ENCODE measurements at regions of chr1 and their contacts with region 1.

Region 1: GRCh38 chr1:182604169-182605164 is at the start of gene RGS16:
- DNase-seq: peak; percentile 61
- ATAC-seq: peak; percentile 91
- H3K4me3 ChIP-seq: peak within 1 kb of the TSS; percentile 85
- H3K27ac ChIP-seq: peak within 1 kb of the TSS; percentile 54
- H3K4me1 ChIP-seq: peaks cover 25% of the 10 kb centered on the region
- H3K27me3 ChIP-seq: no peaks in the 10 kb centered on the region
- CTCF ChIP-seq: no peak
- EP300 ChIP-seq: 0 out of 4 replicates have a peak, but pooled peaks of 1 of the 2 experiments have one; percentile 16
- POLR2A ChIP-seq: peak; percentile 100
- RAD21 ChIP-seq: no peak
- polyA plus RNA-seq, gene RGS16: 16.4 to 18.5 TPM

Region 2: DNA sequence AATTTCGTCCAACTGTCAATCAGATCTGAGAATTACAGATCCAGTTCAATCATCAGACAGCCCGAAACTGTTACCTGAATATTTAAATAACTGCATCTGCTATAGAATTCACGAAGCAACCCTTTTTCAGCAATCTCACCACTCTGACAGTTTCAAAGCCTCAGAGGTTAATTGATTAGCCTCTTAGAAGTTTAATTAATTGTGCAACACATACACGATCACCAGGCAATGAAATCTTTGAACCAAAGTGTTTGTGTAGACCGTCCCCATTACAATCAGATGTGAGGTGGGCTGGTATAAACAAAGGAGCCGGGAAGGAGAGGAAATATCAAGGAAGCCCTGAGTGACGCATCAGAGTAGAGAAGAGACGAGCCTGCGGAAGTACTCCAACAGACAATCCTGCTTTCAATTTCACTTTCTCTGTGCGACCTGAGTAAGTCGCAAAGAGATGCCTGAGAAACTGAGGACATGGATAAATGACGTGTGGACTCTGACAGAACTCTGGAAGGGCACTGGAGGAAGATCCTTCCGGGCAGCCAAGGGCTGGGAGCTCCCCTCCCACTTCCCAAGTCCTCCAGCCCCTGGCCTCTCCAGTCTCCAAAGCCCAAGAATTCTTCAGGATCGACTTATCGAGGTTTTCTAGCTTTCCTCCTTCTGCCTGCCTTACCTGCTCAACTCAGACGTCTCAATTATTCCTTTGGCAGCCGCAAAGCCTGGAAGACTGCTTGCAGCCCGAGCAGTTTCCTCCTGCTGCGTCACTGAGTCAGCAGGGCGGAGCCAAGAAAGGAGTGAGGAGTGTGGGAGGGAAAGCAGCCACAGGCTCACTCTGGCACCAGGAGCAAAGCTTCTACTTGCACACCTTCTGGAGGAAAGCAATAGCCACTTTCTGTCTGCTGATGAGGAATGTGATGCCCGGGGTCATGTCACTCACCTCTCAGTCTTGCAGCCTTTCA is 15.7 kb before region 1 on chr1 and contains the start of gene RNASEL:
- CTCF ChIA-PET with region 1: interaction called, 52 read pairs
- POLR2A ChIA-PET with region 1: interaction called, 6 read pairs
- RAD21 ChIA-PET with region 1: interaction called, 14 read pairs
- SMC1A ChIA-PET with region 1: interaction called, 20 read pairs
- in situ Hi-C with region 1: no loop called
- intact Hi-C with region 1: no loop called
- DNase-seq: no peak
- ATAC-seq: peak; percentile 93
- H3K4me3 ChIP-seq: peak within 1 kb of the TSS; percentile 87
- H3K27ac ChIP-seq: peak within 1 kb of the TSS; percentile 63
- H3K4me1 ChIP-seq: peaks cover 5% of the 10 kb centered on the region; the same call in 1 of the 2 replicates
- H3K27me3 ChIP-seq: no peaks in the 10 kb centered on the region
- CTCF ChIP-seq: no peak
- EP300 ChIP-seq: no peak
- POLR2A ChIP-seq: peak; percentile 42
- RAD21 ChIP-seq: no peak
- polyA plus RNA-seq, gene RNASEL: 3.0 to 3.7 TPM

Region 3: DNA sequence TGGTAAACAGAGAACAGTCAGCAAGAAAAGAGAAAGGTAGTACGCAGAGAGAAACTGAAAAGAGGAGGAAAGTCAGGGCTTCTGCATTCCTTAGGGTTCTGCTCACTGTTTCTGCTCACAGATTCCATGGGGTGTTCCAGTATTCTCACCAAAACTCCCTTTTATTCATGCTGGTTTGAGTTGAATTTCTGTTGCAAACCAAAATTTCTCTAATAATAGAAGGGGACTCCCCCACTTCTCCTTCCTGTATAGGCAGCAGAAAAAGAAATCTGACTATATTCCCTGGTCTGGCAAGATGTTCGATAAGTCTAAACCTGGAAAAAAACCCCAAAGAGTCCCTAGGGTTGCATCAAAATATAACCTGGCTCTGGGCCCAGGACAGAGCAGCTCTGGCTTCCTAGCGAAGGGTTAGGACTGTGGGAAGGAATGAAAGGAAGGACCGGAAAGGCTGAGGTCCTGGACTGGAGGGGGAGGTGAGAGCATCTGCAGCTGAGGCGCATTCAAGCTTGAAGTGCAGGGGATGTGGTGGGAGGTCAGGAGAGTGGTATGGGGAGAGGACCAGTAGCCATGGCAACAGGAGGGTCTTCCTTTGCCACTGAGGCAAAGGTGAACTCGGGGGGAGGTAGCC is 18.5 kb after region 1 on chr1:
- CTCF ChIA-PET with region 1: interaction called, 119 read pairs
- POLR2A ChIA-PET with region 1: interaction called, 20 read pairs
- RAD21 ChIA-PET with region 1: interaction called, 23 read pairs
- SMC1A ChIA-PET with region 1: interaction called, 238 read pairs
- in situ Hi-C with region 1: no loop called
- intact Hi-C with region 1: no loop called
- DNase-seq: no peak
- ATAC-seq: peak; percentile 79
- H3K4me3 ChIP-seq: peak overlapping the region; percentile 42
- H3K27ac ChIP-seq: peak overlapping the region; percentile 29
- H3K4me1 ChIP-seq: peaks cover 59% of the 10 kb centered on the region
- H3K27me3 ChIP-seq: no peaks in the 10 kb centered on the region
- CTCF ChIP-seq: no peak
- EP300 ChIP-seq: peak in 1 of 2 experiments; percentile 60; a peak in 3 of 4 replicates
- POLR2A ChIP-seq: no peak
- RAD21 ChIP-seq: peak; percentile 20

Region 4: DNA sequence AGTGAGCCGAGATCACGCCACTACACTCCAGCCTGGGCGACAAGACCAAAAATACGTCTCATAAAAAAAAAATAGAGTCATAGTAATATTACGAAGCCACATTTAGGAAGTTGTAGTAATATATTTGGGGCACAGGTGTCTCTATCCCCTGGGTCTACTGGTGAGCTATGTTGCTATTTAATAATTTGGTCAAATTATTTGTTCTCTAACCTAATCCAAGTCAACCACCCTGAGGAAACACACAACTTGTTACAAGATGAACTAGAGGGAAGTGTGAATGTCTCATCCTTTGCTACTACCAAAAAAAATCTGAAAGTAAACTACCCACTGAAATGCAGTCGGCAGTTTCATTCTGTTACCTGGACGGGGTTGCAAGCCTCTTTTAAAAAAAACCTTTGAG is 44.6 kb after region 1 on chr1:
- CTCF ChIA-PET with region 1: interaction called, 17 read pairs
- POLR2A ChIA-PET with region 1: interaction called, 5 read pairs
- RAD21 ChIA-PET with region 1: interaction called, 9 read pairs
- SMC1A ChIA-PET with region 1: interaction called, 16 read pairs
- in situ Hi-C with region 1: no loop called
- intact Hi-C with region 1: no loop called
- DNase-seq: no peak
- ATAC-seq: peak; percentile 75
- H3K4me3 ChIP-seq: no peak overlapping the region
- H3K27ac ChIP-seq: no peak overlapping the region
- H3K4me1 ChIP-seq: peaks cover 41% of the 10 kb centered on the region
- H3K27me3 ChIP-seq: no peaks in the 10 kb centered on the region
- CTCF ChIP-seq: 0 out of 6 replicates have a peak, but pooled peaks of 1 of the 3 experiments have one; percentile 2
- EP300 ChIP-seq: no peak
- POLR2A ChIP-seq: no peak
- RAD21 ChIP-seq: peak; percentile 13; the same call in 1 of the 2 replicates

Region 5: GRCh38 chr1:182761396-182762395 is 157.2 kb after region 1 on chr1:
- CTCF ChIA-PET with region 1: interaction called, 3 read pairs
- POLR2A ChIA-PET with region 1: no interaction called
- RAD21 ChIA-PET with region 1: interaction called, 16 read pairs
- SMC1A ChIA-PET with region 1: interaction called, 5 read pairs
- in situ Hi-C with region 1: no loop called
- intact Hi-C with region 1: no loop called
- DNase-seq: no peak
- ATAC-seq: peak; percentile 63
- H3K4me3 ChIP-seq: no peak overlapping the region
- H3K27ac ChIP-seq: peak overlapping the region; percentile 42
- H3K4me1 ChIP-seq: peaks cover 4% of the 10 kb centered on the region; the same call in 1 of the 2 replicates
- H3K27me3 ChIP-seq: no peaks in the 10 kb centered on the region
- CTCF ChIP-seq: no peak
- EP300 ChIP-seq: no peak
- POLR2A ChIP-seq: no peak
- RAD21 ChIP-seq: no peak

Region 6: DNA sequence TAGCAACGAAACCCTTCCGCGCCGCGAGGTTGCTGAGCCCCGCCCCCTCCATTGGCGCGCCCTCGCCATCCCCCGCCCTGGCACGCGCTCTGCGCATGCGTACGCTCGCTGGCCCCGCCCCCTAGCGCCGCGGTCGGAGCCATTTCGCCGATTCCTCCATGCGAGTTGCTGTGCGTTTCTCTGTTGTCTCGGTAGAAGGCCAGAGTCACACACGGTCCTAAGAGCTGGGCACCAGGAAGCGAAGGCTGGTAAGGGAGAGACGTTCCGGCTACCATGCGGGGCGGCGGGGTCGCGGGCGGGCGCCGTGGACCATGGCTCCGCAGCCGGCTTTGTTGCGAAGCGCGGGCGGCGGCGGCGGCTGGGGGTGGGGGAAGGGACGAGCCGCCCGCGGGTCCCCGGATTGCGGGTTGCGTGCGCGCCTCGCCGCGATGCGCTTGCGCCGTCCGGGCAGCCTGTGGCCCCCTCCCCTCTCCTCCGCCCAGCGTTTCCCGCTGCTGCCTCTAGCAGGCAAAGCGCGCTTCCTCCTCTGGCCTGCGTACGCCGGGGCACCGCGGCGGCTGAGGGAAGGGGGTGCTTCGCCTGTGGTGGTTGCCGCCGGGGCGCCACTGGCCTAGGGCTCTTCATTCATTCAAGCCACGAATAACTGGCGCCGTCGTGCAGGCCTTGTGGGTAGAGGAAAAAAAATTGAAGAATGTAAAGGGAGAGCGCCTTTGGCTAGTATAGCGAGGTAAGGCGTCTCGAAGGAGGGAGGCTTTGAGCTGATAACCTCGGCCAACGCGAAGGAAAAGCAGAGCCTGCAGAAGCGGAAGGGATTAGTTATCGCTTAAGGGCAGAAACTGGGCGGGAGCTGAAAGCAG is 235.0 kb after region 1 on chr1 and contains the start of gene DHX9:
- CTCF ChIA-PET with region 1: no interaction called
- POLR2A ChIA-PET with region 1: no interaction called
- RAD21 ChIA-PET with region 1: interaction called, 3 read pairs
- SMC1A ChIA-PET with region 1: no interaction called
- in situ Hi-C with region 1: no loop called
- intact Hi-C with region 1: loop called (anchors 5 kb)
- DNase-seq: peak; percentile 60
- ATAC-seq: peak; percentile 89
- H3K4me3 ChIP-seq: peak within 1 kb of the TSS; percentile 91
- H3K27ac ChIP-seq: peak within 1 kb of the TSS; percentile 81
- H3K4me1 ChIP-seq: no peaks in the 10 kb centered on the region
- H3K27me3 ChIP-seq: no peaks in the 10 kb centered on the region
- CTCF ChIP-seq: peak in 2 of 3 experiments; percentile 6 to 27; a peak in 2 of 6 replicates
- EP300 ChIP-seq: no peak
- POLR2A ChIP-seq: peak; percentile 98
- RAD21 ChIP-seq: no peak
- polyA plus RNA-seq, gene DHX9: 90.7 to 130 TPM